ENCODE measurements at regions of chr14 and their contacts with region 1.

Region 1: GRCh38 chr14:87896393-87897380 is 96.3 kb downstream of the GALC start:
- H3K4me3 Mint-ChIP-seq: no peak overlapping the region
- H3K27ac Mint-ChIP-seq: no peak overlapping the region
- H3K4me1 Mint-ChIP-seq: no peaks in the 10 kb centered on the region
- H3K27me3 Mint-ChIP-seq: peaks cover 13% of the 10 kb centered on the region

Region 2: DNA sequence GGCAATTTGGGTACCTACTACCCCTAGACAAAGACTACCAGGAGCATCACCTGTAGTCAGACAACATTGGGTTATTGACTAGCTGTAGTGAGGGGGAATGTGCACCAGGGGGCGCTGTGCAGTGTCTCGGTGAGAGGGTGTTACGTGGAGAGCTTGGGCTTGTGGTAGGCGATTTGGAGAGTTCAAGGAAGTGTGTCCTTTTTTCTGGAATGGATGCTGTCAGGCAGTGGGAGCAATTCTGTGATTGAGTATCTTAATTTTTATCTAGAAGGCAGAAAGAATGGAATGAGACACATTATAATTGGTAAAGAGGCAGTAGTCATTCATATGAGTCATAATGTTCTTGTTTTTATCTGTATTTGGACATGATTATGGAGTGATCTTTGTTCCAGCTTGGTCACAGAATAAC is 91.4 kb before region 1 on chr14:
- intact Hi-C with region 1: loop called (anchors 5 kb)
- H3K4me3 Mint-ChIP-seq: no peak overlapping the region
- H3K27ac Mint-ChIP-seq: no peak overlapping the region
- H3K4me1 Mint-ChIP-seq: no peaks in the 10 kb centered on the region
- H3K27me3 Mint-ChIP-seq: no peaks in the 10 kb centered on the region

Region 3: GRCh38 chr14:87838931-87839330 is 57.8 kb before region 1 on chr14:
- intact Hi-C with region 1: no loop called
- H3K4me3 Mint-ChIP-seq: no peak overlapping the region
- H3K27ac Mint-ChIP-seq: no peak overlapping the region
- H3K4me1 Mint-ChIP-seq: no peaks in the 10 kb centered on the region
- H3K27me3 Mint-ChIP-seq: no peaks in the 10 kb centered on the region

Measured in dendritic cell treated with granulocyte-macrophage colony-stimulating factor and Interleukin-4, amounts not matched to agents 40 ng/mL and 50 ng/mL, for 4 days (primary cell).